Caco-2 (cell line): ENCODE measurements at regions of chr6 and their contacts with region 1.

Region 1: GRCh38 chr6:30013291-30013922 is 47.7 kb upstream of the POLR1H start:
- DNase-seq: no peak
- H3K4me3 ChIP-seq: no peak overlapping the region
- H3K4me3 Mint-ChIP-seq: no peak overlapping the region
- H3K27ac Mint-ChIP-seq: no peak overlapping the region
- H3K4me1 ChIP-seq: no peaks in the 10 kb centered on the region
- H3K4me1 Mint-ChIP-seq: no peaks in the 10 kb centered on the region
- H3K27me3 ChIP-seq: no peaks in the 10 kb centered on the region; the same call in 1 of the 2 replicates
- H3K27me3 Mint-ChIP-seq: no peaks in the 10 kb centered on the region
- CTCF ChIP-seq: peak; percentile 69 to 74

Region 2: DNA sequence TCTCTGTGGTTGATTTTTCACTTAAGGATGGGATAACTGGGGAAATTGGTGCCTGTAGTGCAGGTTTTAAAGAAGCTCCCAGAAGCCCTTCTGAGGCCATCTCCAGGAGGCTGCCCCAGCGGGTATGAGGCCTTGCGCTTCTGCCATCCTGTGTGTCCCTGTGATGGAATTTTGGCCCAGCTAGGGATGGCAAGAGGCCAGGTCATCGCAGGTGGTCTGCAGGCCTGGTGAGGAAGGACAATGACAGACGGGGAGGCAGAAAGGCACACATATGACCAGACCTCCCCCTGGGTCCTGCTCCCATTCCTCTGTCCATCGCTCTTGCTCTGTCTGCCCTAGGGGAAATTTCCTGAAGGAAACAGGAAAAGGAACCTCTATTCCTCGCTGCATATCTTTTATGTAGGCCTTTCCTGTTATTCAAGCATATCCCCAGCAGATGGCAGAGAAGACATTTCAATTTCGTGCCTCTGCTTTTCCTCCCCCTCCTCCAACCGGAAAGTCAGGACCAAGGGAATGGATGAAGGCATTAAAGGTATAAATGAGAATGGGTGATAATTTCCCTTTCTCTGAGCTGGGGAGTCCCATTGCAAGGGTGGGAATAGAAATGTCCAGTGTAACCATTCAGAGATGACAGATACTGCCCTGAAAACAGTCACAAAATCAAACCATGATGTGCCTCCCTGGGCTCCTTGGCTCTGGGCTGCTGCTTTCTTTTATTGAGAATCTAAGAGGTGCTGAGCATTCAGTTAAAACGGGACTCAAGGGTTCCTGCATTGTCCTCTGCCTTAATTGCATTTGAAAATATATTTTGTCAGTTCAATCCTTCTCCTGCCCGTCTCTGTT is 307.8 kb before region 1 on chr6:
- CTCF ChIA-PET with region 1: no interaction called
- POLR2A ChIA-PET with region 1: no interaction called
- intact Hi-C with region 1: loop called (anchors 10 kb)
- DNase-seq: peak in 1 of 2 experiments; percentile 58
- H3K4me3 ChIP-seq: no peak overlapping the region
- H3K4me3 Mint-ChIP-seq: no peak overlapping the region
- H3K27ac Mint-ChIP-seq: no peak overlapping the region
- H3K4me1 ChIP-seq: no peaks in the 10 kb centered on the region
- H3K4me1 Mint-ChIP-seq: no peaks in the 10 kb centered on the region
- H3K27me3 ChIP-seq: no peaks in the 10 kb centered on the region
- H3K27me3 Mint-ChIP-seq: peaks cover 13% of the 10 kb centered on the region
- CTCF ChIP-seq: peak; percentile 62 to 63

Region 3: DNA sequence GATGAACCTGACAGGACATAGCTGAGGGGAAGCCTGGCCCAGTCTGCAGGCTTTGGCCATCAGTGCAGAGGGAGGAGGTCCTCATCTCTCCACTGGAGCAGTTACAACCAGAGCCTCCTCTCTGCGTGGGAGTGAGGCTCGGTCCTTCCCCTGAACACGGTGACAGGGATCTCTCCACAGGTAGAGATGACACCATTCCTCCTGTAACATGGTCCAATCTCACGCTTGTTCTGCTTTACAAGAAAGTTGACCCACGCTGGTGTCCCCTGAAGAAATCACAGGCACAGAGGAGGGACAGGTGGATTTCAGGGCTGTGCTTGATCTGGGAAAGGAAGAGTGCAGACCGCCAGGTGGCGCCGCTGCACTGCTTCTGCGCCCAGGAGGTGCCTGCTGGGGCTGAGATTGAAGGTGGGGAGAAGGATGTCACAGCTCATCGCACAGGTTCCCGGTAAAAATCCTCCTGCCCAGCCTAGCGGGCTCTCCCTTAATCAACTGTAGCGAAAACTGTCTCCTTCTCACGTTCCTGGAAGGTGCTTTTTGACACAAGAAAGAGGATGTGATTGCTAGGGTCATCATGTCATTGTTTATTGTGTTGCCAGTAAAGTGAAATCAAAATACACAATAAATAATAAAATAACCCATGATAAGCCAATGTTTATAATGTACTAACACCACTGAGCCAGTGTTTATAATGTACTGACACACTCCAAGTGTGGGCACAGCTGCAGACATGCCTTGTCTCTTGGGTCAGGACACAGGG is 165.4 kb before region 1 on chr6:
- CTCF ChIA-PET with region 1: interaction called, 4 read pairs
- POLR2A ChIA-PET with region 1: no interaction called
- intact Hi-C with region 1: loop called (anchors 1 kb)
- DNase-seq: peak; percentile 75 to 83
- H3K4me3 ChIP-seq: no peak overlapping the region
- H3K4me3 Mint-ChIP-seq: no peak overlapping the region
- H3K27ac Mint-ChIP-seq: no peak overlapping the region
- H3K4me1 ChIP-seq: no peaks in the 10 kb centered on the region
- H3K4me1 Mint-ChIP-seq: no peaks in the 10 kb centered on the region
- H3K27me3 ChIP-seq: no peaks in the 10 kb centered on the region
- H3K27me3 Mint-ChIP-seq: peaks cover 15% of the 10 kb centered on the region
- CTCF ChIP-seq: peak; percentile 89 to 93

Region 4: GRCh38 chr6:29976588-29977424 is 36.6 kb before region 1 on chr6:
- CTCF ChIA-PET with region 1: no interaction called
- POLR2A ChIA-PET with region 1: no interaction called
- intact Hi-C with region 1: no loop called
- DNase-seq: peak; percentile 79
- H3K4me3 ChIP-seq: peak overlapping the region; percentile 57
- H3K4me3 Mint-ChIP-seq: peak overlapping the region; percentile 88
- H3K27ac Mint-ChIP-seq: peak overlapping the region; percentile 78
- H3K4me1 ChIP-seq: no peaks in the 10 kb centered on the region
- H3K4me1 Mint-ChIP-seq: peaks cover 7% of the 10 kb centered on the region
- H3K27me3 ChIP-seq: no peaks in the 10 kb centered on the region
- H3K27me3 Mint-ChIP-seq: peaks cover 11% of the 10 kb centered on the region
- CTCF ChIP-seq: peak in 1 of 2 experiments; percentile 50

Region 5: GRCh38 chr6:29989211-29989610 is 24.2 kb before region 1 on chr6:
- CTCF ChIA-PET with region 1: no interaction called
- POLR2A ChIA-PET with region 1: no interaction called
- intact Hi-C with region 1: no loop called
- DNase-seq: no peak
- H3K4me3 ChIP-seq: no peak overlapping the region
- H3K4me3 Mint-ChIP-seq: no peak overlapping the region
- H3K27ac Mint-ChIP-seq: no peak overlapping the region
- H3K4me1 ChIP-seq: no peaks in the 10 kb centered on the region
- H3K4me1 Mint-ChIP-seq: no peaks in the 10 kb centered on the region
- H3K27me3 ChIP-seq: no peaks in the 10 kb centered on the region
- H3K27me3 Mint-ChIP-seq: peaks cover 21% of the 10 kb centered on the region
- CTCF ChIP-seq: no peak

Region 6: GRCh38 chr6:30037182-30037788 is 23.9 kb after region 1 on chr6:
- CTCF ChIA-PET with region 1: no interaction called
- POLR2A ChIA-PET with region 1: no interaction called
- intact Hi-C with region 1: no loop called
- DNase-seq: peak in 1 of 2 experiments; percentile 11
- H3K4me3 ChIP-seq: no peak overlapping the region
- H3K4me3 Mint-ChIP-seq: no peak overlapping the region
- H3K27ac Mint-ChIP-seq: no peak overlapping the region
- H3K4me1 ChIP-seq: no peaks in the 10 kb centered on the region
- H3K4me1 Mint-ChIP-seq: no peaks in the 10 kb centered on the region
- H3K27me3 ChIP-seq: no peaks in the 10 kb centered on the region
- H3K27me3 Mint-ChIP-seq: no peaks in the 10 kb centered on the region
- CTCF ChIP-seq: peak; percentile 57 to 63